Heart left ventricle (tissue), 16 donors: ENCODE measurements at regions of chr19 and their contacts with region 1.

Region 1: GRCh38 chr19:11798391-11799330 is at the start of gene ZNF491:
- DNase-seq: peak; percentile 93 to 96 (median 95)
- ATAC-seq: peak; percentile 99 to 100 (median 99)
- H3K4me3 ChIP-seq: peak within 1 kb of the TSS; percentile 51 to 93 (median 78)
- H3K27ac ChIP-seq: peak within 1 kb of the TSS; percentile 66 to 92 (median 82)
- H3K4me1 ChIP-seq: peaks cover 0 to 22% (median 12%) of the 10 kb centered on the region in 12 donors
- H3K27me3 ChIP-seq: no peaks in the 10 kb centered on the region
- CTCF ChIP-seq: peak in 8 of 12 donors; percentile 14 to 55 (median 39)
- POLR2A ChIP-seq: peak in 1 of 2 donors; percentile 91
- total RNA-seq, gene ZNF491: 0.91 to 3.4 (median 2.5) TPM

Region 2: GRCh38 chr19:11738746-11739620 is 59.7 kb before region 1 on chr19 and contains the start of gene ZNF823:
- intact Hi-C with region 1: loop called in 1 of 10 experiments (anchors 2 kb)
- DNase-seq: peak; percentile 98 to 99 (median 99)
- ATAC-seq: peak; percentile 99 to 100 (median 100)
- H3K4me3 ChIP-seq: peak within 1 kb of the TSS; percentile 79 to 100 (median 92)
- H3K27ac ChIP-seq: peak within 1 kb of the TSS; percentile 77 to 96 (median 92)
- H3K4me1 ChIP-seq: peaks cover 0 to 27% (median 20%) of the 10 kb centered on the region in 12 donors
- H3K27me3 ChIP-seq: no peaks in the 10 kb centered on the region
- CTCF ChIP-seq: peak in 1 of 12 donors; percentile 9
- POLR2A ChIP-seq: peak in 1 of 2 donors; percentile 85
- total RNA-seq, gene ZNF823: 2.6 to 5.2 (median 4.0) TPM

Region 3: DNA sequence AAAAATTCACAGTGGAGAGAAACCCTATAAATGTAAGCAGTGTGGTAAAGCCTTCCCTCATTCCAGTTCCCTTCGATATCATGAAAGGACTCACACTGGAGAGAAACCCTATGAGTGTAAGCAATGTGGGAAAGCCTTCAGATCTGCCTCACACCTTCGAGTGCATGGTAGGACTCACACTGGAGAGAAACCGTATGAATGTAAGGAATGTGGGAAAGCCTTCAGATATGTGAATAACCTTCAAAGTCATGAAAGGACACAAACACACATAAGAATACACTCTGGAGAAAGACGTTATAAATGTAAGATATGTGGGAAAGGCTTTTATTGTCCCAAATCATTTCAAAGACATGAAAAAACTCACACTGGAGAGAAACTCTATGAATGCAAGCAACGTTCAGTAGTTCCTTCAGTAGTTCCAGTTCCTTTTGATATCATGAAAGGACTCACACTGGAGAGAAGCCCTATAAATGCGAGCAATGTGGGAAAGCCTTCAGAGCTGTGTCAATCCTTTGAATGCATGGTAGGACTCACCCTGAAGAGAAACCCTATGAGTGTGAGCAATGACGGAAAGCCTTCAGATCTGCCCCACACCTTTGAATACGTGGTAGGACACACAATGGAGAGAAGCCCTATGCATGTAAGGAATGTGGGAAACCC is 33.7 kb after region 1 on chr19:
- intact Hi-C with region 1: no loop called
- DNase-seq: no peak
- ATAC-seq: no peak
- H3K4me3 ChIP-seq: no peak overlapping the region
- H3K27ac ChIP-seq: no peak overlapping the region
- H3K4me1 ChIP-seq: peaks cover 0 to 6% (median 0%) of the 10 kb centered on the region in 12 donors
- H3K27me3 ChIP-seq: no peaks in the 10 kb centered on the region
- CTCF ChIP-seq: no peak
- POLR2A ChIP-seq: no peak

Region 4: DNA sequence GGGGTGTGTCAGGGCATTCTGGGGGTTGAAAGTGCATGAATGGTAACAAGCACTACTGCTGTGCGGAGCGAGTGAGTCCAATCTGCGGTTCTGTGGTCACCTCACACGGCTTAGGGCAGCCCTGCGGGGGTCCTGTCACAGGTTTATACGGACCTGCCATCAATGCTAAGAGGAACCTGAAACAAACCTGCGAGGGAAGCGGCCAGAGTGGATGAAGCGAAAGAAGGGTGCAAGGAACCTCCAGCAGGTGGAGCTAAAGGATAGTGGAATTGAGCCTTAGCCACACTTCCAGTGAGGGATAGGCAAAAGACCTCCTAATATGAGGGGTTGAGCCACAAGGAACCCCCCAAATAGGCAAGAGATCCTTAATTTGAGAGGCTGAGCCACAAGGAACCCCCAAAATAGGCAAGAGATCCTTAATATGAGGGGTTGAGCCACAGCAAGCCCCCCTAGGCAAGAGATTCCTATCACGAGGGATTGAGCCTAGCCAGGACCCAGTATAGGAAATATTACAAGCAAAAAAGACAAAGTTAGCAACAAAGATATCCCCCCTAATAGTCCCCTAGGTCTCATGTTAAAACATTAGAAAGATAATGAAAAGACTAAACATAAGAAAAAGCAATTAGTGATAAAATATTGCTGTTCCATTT is 82.6 kb after region 1 on chr19:
- intact Hi-C with region 1: loop called in 4 of 10 experiments (anchors 1 to 10 kb)
- DNase-seq: peak in 4 of 5 donors; percentile 37 to 48 (median 43)
- ATAC-seq: peak in 3 of 4 donors; percentile 76 to 83 (median 79)
- H3K4me3 ChIP-seq: peak overlapping the region in 2 of 12 donors; percentile 8 to 17
- H3K27ac ChIP-seq: no peak overlapping the region
- H3K4me1 ChIP-seq: peaks cover 0 to 4% (median 0%) of the 10 kb centered on the region in 12 donors
- H3K27me3 ChIP-seq: no peaks in the 10 kb centered on the region
- CTCF ChIP-seq: peak; percentile 51 to 81 (median 72)
- POLR2A ChIP-seq: no peak

Region 5: GRCh38 chr19:11902228-11902627 is 103.6 kb after region 1 on chr19:
- intact Hi-C with region 1: no loop called
- DNase-seq: no peak
- ATAC-seq: no peak
- H3K4me3 ChIP-seq: no peak overlapping the region
- H3K27ac ChIP-seq: no peak overlapping the region
- H3K4me1 ChIP-seq: no peaks in the 10 kb centered on the region
- H3K27me3 ChIP-seq: no peaks in the 10 kb centered on the region
- CTCF ChIP-seq: no peak
- POLR2A ChIP-seq: no peak

Region 6: DNA sequence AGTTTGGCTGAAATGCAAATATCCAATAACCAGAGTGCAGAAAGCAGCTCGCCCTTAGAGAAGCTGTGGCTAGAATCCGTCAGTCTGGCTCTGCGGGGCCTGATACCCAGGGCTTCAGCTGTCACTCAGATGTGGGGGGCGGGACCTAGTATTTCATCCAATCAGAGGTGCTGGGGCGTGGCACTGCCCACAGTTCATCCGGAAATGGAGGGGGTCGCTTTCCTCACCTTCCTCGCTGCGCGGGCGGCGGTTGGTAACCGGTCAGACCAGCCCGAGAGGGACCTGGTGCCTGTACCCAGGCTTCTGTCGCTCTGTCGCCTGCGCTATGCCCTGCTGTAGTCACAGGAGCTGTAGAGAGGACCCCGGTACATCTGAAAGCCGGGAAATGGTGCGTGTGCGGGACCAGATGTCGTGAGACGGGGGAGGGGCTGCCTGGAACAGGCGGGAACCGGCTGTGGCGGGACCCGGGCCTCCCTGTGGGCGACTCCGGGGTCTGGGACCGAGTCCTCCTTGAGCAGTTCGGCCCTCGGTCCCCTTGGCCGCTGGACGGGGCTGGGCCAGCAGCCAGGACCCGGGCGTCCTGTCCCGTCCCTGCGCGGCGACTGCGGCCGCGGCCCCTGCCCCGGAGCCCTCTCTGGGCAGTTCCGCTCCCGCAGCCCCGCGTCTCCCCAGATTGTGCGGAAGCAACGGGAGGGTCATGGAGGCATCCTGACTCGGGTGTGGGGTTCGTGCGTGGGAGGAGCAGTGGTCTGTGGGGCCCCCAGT is 126.4 kb after region 1 on chr19 and contains the start of gene ZNF700:
- intact Hi-C with region 1: loop called in 1 of 10 experiments (anchors 5 kb)
- DNase-seq: peak; percentile 94 to 96 (median 95)
- ATAC-seq: peak; percentile 98 to 99 (median 99)
- H3K4me3 ChIP-seq: peak within 1 kb of the TSS; percentile 57 to 100 (median 92)
- H3K27ac ChIP-seq: peak within 1 kb of the TSS; percentile 79 to 99 (median 92)
- H3K4me1 ChIP-seq: peaks cover 0 to 35% (median 12%) of the 10 kb centered on the region in 12 donors
- H3K27me3 ChIP-seq: no peaks in the 10 kb centered on the region
- CTCF ChIP-seq: no peak
- POLR2A ChIP-seq: peak in 1 of 2 donors; percentile 77
- total RNA-seq, gene ZNF700: 2.2 to 7.5 (median 4.1) TPM

Region 7: GRCh38 chr19:12052497-12053169 is 254.0 kb after region 1 on chr19 and contains the start of gene ZNF878:
- intact Hi-C with region 1: loop called in 1 of 10 experiments (anchors 10 kb)
- DNase-seq: peak; percentile 90 to 95 (median 92)
- ATAC-seq: peak; percentile 100
- H3K4me3 ChIP-seq: peak within 1 kb of the TSS; percentile 59 to 85 (median 68)
- H3K27ac ChIP-seq: peak within 1 kb of the TSS in 11 of 12 donors; percentile 20 to 79 (median 66)
- H3K4me1 ChIP-seq: peaks cover 0 to 18% (median 2%) of the 10 kb centered on the region in 12 donors
- H3K27me3 ChIP-seq: no peaks in the 10 kb centered on the region
- CTCF ChIP-seq: peak in 5 of 12 donors; percentile 7 to 32 (median 26)
- POLR2A ChIP-seq: peak; percentile 71 to 94
- total RNA-seq, gene ZNF878: 0.16 to 0.24 (median 0.22) TPM in 4 of 9 donors, not detected in the others